ENCODE measurements at regions of chr5 and their contacts with region 1.

Region 1: GRCh38 chr5:143395638-143396352 is 7.7 kb downstream of the NR3C1 start:
- DNase-seq: no peak
- ATAC-seq: no peak
- H3K4me3 ChIP-seq: peak overlapping the region in 8 of 10 donors; percentile 6 to 97 (median 84)
- H3K27ac ChIP-seq: peak overlapping the region in 5 of 10 donors; percentile 3 to 99 (median 16)
- H3K4me1 ChIP-seq: peaks cover 0 to 98% (median 91%) of the 10 kb centered on the region in 9 donors
- H3K27me3 ChIP-seq: no peaks in the 10 kb centered on the region
- CTCF ChIP-seq: no peak

Region 2: GRCh38 chr5:143182901-143183820 is 212.6 kb before region 1 on chr5:
- intact Hi-C with region 1: loop called in 1 of 10 experiments (anchors 10 kb)
- DNase-seq: peak; percentile 23 to 43
- ATAC-seq: peak in 6 of 8 donors; percentile 39 to 84 (median 54)
- H3K4me3 ChIP-seq: no peak overlapping the region
- H3K27ac ChIP-seq: peak overlapping the region in 3 of 10 donors; percentile 3 to 24 (median 13)
- H3K4me1 ChIP-seq: peaks cover 0 to 79% (median 30%) of the 10 kb centered on the region in 9 donors
- H3K27me3 ChIP-seq: no peaks in the 10 kb centered on the region
- CTCF ChIP-seq: no peak

Region 3: DNA sequence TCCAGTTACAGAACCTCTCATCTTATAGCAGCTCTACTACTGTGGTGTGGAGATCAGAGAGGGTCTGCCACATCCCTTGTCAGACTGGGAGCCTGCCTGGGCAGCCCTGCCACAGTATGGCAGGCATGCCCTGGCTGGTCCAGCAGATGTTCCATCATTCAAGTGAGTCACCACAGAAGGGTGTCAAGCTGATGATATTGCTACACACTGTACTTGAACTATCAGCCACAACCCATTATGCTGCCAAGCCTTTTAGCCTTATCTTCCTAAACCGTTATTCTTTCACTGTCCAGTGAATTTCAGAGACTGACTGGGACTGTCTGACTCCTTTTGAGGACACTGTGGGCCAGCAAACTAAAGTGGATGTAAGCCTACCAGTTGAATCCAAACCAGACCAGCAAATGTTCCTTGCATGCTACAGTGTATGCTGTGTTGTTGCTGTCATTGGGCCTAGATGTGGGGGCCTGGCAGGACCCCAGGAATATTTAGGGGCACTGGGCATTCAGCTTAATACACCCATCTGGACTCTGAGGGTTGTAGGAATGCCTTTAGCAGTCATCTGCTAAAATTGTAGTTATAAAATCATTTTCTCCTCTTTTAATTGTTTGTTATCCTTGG is 194.9 kb before region 1 on chr5:
- intact Hi-C with region 1: loop called in 5 of 10 experiments (anchors 5 to 10 kb)
- DNase-seq: peak; percentile 40 to 59
- ATAC-seq: peak; percentile 89 to 99 (median 96)
- H3K4me3 ChIP-seq: no peak overlapping the region
- H3K27ac ChIP-seq: peak overlapping the region in 4 of 10 donors; percentile 28 to 64 (median 50)
- H3K4me1 ChIP-seq: peaks cover 5 to 71% (median 51%) of the 10 kb centered on the region in 9 donors
- H3K27me3 ChIP-seq: no peaks in the 10 kb centered on the region
- CTCF ChIP-seq: no peak

Region 4: GRCh38 chr5:143262393-143263174 is 133.2 kb before region 1 on chr5:
- intact Hi-C with region 1: no loop called
- DNase-seq: no peak
- ATAC-seq: peak in 2 of 8 donors; percentile 9 to 75
- H3K4me3 ChIP-seq: no peak overlapping the region
- H3K27ac ChIP-seq: peak overlapping the region in 1 of 10 donors; percentile 68
- H3K4me1 ChIP-seq: peaks cover 0 to 9% (median 0%) of the 10 kb centered on the region in 9 donors
- H3K27me3 ChIP-seq: no peaks in the 10 kb centered on the region
- CTCF ChIP-seq: no peak

Region 5: DNA sequence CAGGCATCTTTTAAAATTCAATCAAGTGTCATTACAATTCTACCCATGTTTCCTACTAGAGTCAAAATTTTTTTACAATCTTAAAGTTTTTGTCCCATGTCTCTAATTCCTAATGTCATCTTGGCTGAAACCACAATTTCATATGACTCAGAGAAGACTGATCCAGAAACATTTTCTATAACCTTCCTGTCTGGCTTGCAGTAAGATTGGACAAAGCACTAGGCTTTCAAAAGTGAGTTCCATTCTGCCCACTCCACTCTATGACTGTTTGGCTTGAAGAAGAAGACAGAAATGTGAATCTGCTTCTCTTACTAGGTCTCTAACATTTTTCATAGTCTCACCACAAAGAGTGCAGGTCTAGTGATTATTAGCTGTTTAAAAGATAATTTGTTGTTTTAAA is 81.1 kb before region 1 on chr5:
- intact Hi-C with region 1: loop called in 5 of 10 experiments (anchors 5 to 10 kb)
- DNase-seq: no peak
- ATAC-seq: peak in 4 of 8 donors; percentile 24 to 74 (median 52)
- H3K4me3 ChIP-seq: no peak overlapping the region
- H3K27ac ChIP-seq: peak overlapping the region in 2 of 10 donors; percentile 2 to 42
- H3K4me1 ChIP-seq: peaks cover 11 to 90% (median 69%) of the 10 kb centered on the region in 9 donors
- H3K27me3 ChIP-seq: no peaks in the 10 kb centered on the region
- CTCF ChIP-seq: no peak

Region 6: GRCh38 chr5:143349177-143349576 is 46.6 kb before region 1 on chr5:
- intact Hi-C with region 1: loop called in 1 of 10 experiments (anchors 5 kb)
- DNase-seq: no peak
- ATAC-seq: no peak
- H3K4me3 ChIP-seq: no peak overlapping the region
- H3K27ac ChIP-seq: peak overlapping the region in 2 of 10 donors; percentile 18 to 73
- H3K4me1 ChIP-seq: peaks cover 4 to 100% (median 91%) of the 10 kb centered on the region in 9 donors
- H3K27me3 ChIP-seq: no peaks in the 10 kb centered on the region
- CTCF ChIP-seq: no peak

Region 7: DNA sequence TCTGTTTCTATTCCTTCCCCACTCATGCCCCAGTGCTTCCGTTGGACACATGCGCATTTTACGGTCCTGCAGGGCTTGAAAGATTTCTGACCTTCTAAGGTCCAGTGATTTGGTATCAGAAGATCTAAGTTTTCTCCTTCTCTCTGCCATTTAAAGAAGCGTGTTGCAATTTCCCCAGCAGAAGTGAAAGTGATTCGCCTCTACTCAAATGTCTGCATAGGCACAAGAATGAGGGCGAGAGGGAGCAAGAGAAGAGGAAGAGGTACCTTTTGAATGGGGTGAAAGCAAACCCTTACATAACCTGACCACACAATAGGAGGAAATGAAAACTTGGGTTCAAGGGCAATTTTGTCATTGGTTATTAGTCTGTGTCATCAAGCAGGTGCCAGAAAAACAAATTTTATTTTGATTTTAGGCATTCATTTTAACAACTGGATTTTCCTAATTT is 39.4 kb after region 1 on chr5:
- intact Hi-C with region 1: no loop called
- DNase-seq: peak in 1 of 2 donors; percentile 22
- ATAC-seq: peak in 6 of 8 donors; percentile 46 to 79 (median 73)
- H3K4me3 ChIP-seq: peak overlapping the region in 6 of 10 donors; percentile 24 to 46 (median 26)
- H3K27ac ChIP-seq: peak overlapping the region in 6 of 10 donors; percentile 2 to 85 (median 25)
- H3K4me1 ChIP-seq: peaks cover 0 to 25% (median 5%) of the 10 kb centered on the region in 9 donors
- H3K27me3 ChIP-seq: no peaks in the 10 kb centered on the region
- CTCF ChIP-seq: no peak

Region 8: DNA sequence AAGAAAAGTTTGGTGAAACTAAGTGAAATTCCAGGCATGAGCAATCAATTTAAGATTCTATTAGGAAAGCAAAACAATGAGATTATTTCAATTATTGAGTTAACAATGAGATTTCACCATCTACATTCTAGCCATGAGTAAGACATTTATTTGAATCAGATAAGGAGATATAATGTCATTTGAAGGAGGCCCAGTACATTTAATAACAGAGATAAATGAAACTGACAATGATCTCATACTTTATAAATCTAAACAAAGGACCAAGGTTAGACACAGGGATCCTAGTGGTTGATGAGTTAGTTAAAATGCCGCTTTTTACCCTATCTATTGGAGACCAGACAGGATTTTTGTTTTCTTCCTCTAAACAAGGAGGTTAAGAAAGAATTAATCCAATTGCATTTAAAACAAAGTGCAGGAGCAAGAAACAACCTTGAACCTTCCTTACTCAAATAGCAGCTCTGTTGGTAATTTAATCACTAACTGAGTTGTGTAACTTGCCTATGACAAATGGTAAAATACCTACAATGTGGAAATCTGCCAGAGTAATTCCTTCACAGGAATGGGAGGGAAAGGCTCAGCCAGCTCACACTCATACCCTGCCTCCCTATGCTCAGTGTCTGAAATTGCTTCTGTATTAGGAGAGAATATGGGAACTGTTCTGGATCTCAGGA is 111.2 kb after region 1 on chr5:
- intact Hi-C with region 1: no loop called
- DNase-seq: no peak
- ATAC-seq: peak in 7 of 8 donors; percentile 42 to 92 (median 74)
- H3K4me3 ChIP-seq: no peak overlapping the region
- H3K27ac ChIP-seq: peak overlapping the region in 4 of 10 donors; percentile 4 to 34 (median 22)
- H3K4me1 ChIP-seq: peaks cover 0 to 32% (median 15%) of the 10 kb centered on the region in 9 donors
- H3K27me3 ChIP-seq: no peaks in the 10 kb centered on the region
- CTCF ChIP-seq: peak in 1 of 9 donors; percentile 14

Region 9: GRCh38 chr5:143527808-143528207 is 132.0 kb after region 1 on chr5:
- intact Hi-C with region 1: no loop called
- DNase-seq: no peak
- ATAC-seq: no peak
- H3K4me3 ChIP-seq: no peak overlapping the region
- H3K27ac ChIP-seq: no peak overlapping the region
- H3K4me1 ChIP-seq: peaks cover 0 to 2% (median 0%) of the 10 kb centered on the region in 9 donors
- H3K27me3 ChIP-seq: no peaks in the 10 kb centered on the region
- CTCF ChIP-seq: no peak